HAP-1 (cell line): ENCODE measurements at regions of chr15 and their contacts with region 1.

Region 1: DNA sequence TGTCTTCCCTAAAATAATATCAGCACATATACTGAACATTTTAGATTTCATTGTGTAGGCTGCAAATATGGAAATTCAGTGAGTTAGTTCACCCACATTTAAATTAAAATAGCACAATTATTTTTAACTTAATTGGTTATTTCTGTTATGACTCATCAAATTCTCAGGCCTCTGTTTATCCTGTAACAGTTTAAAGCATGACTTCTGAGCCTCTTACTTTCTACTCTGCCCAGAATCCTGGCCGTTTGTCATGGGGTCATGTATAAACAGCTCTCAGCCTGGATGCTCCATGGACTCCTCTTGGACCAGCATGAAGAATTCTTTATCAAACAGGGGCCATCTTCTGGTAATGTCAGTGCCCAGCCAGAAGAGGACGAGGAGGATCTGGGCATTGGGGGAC is 12.2 kb downstream of the TUBGCP4 start:
- DNase-seq: no peak
- H3K4me3 ChIP-seq: no peak overlapping the region
- H3K4me1 ChIP-seq: no peaks in the 10 kb centered on the region
- H3K27me3 ChIP-seq: no peaks in the 10 kb centered on the region

Region 2: GRCh38 chr15:43241100-43241499 is 142.0 kb before region 1 on chr15:
- in situ Hi-C with region 1: no loop called
- DNase-seq: no peak
- H3K4me3 ChIP-seq: no peak overlapping the region
- H3K4me1 ChIP-seq: no peaks in the 10 kb centered on the region
- H3K27me3 ChIP-seq: peaks cover 6% of the 10 kb centered on the region; the same call in 1 of the 2 replicates

Region 3: DNA sequence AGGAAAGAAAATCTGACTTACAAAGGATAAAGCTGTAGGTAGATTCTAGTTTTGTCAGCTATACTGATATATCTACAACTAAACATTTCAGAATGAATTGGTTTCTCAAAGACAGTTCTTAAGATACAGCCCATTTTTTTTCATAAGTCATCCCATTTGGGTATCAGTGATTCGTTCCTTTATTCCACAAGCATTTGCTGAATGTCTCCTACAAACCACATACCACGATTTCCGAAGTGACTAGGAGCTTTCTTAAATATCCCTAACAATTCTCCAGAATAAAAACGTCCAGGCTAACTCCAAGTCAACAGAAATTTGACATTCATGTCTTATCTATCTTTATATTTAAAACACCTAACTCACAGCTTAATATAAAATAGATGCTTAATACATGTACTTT is 50.1 kb after region 1 on chr15:
- in situ Hi-C with region 1: loop called (anchors 5 kb)
- DNase-seq: no peak
- H3K4me3 ChIP-seq: no peak overlapping the region
- H3K4me1 ChIP-seq: no peaks in the 10 kb centered on the region
- H3K27me3 ChIP-seq: no peaks in the 10 kb centered on the region